ENCODE measurements at regions of chr2 and their contacts with region 1.

Region 1: GRCh38 chr2:11344342-11344955 is at the start of gene ROCK2:
- DNase-seq: no peak
- H3K4me3 ChIP-seq: peak within 1 kb of the TSS; percentile 66
- H3K27me3 ChIP-seq: no peaks in the 10 kb centered on the region
- CTCF ChIP-seq: no peak
- polyA plus RNA-seq, gene ROCK2: 6.0 and 15.3 TPM in 2 replicates

Region 2: DNA sequence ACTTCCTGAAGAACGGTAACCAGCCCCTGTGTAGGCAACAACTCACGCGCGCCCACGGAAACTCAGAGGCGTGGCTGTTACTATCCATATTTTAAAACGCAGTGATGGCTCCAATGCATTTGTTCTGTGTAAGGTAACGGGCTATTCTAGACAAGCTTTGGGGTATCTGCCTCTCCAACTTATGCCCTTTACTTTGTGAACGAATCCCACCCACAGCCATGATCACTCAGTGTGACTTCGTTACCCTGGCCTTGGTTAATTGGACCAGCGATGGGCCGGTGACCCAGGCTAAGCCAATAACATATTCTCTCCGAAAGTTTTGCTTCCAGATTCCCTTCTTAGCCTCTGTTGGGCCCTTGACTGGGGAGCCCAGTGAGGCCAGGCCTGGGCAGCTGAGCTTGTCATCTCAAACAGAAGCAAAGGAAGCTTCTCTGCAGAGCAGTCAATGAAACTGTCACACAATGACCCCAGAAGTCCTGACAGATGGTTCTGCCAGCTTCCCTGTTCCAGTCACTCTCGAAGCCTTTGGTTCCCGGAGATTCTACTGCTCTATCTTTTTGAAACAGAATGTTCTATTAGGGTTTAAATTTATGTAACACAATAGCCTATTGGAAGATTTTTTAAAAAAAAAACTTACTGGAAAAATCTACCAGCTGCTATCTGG is 30.7 kb after region 1 on chr2:
- CTCF ChIA-PET with region 1: interaction called, 3 read pairs
- POLR2A ChIA-PET with region 1: interaction called, 12 read pairs
- DNase-seq: no peak
- H3K4me3 ChIP-seq: no peak overlapping the region
- H3K27me3 ChIP-seq: no peaks in the 10 kb centered on the region
- CTCF ChIP-seq: no peak

Region 3: DNA sequence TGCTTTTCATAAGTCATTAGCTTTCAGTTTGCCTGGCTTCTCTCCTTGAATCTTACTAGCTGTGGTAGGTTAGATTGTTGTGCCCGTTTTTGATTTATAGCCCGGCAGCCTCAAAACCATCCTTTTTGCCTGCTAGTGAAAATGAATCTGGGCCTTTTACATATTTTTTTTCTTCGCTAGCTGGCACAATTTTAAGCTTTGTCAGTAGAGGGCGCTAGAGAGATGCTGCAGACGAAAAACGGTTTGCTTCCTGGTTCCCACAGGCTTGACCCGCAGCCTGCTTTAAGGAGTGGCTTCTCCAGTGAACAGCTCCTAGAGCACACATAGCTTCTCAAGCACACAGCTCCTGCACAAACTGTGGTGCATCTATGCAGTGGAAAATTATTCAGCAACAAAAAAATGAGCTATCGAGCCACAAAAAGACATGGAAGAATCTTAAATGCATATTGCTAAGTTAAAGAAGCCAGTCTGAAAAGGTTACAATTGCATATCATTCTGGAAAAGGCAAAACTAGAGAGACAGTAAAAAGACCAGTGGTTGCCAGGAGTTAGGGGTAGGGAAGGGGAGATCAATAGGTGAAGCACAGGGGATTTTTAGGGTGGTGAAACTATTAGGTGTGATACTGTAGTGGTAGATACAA is 73.6 kb after region 1 on chr2:
- CTCF ChIA-PET with region 1: no interaction called
- POLR2A ChIA-PET with region 1: no interaction called
- DNase-seq: no peak
- H3K4me3 ChIP-seq: no peak overlapping the region
- H3K27me3 ChIP-seq: no peaks in the 10 kb centered on the region; the same call in 1 of the 2 replicates
- CTCF ChIP-seq: peak; percentile 30

Measured in BJ (cell line).